Endothelial cell of umbilical vein (primary cell): ENCODE measurements at regions of chr12 and their contacts with region 1.

Region 1: DNA sequence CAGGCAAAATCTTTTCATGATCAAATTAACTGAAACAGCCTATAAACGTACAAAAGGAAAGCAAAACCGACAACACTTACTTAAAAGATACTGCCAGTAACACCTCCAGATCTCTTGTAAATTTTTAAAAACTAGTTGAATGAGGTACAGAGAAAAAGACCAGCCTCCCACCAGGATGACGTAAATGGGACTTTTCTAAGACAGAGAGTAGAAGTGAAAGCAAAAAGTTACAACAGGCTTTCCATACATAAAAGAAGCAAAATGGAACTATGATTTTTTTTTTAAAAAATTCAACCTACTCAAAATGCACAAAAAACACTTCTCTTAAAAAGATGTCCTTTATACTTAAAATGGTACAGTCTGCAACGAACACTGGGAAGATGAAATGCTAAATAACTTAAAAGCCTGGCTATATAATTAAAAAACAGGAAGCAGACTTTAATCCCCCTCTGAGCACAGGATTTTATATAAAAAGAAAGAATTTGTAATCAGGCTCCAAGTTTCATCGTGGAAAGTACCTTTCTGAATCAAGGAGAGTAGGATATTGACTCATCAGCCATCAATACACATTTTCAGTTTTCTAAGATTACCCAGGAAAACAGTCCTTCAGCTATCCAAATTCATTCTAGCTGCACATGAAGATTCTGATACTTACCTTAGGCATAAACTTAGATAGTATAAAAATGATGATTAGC is 14.2 kb upstream of the MYO1A start:
- DNase-seq: no peak
- H3K4me3 ChIP-seq: no peak overlapping the region
- H3K27ac ChIP-seq: no peak overlapping the region
- H3K4me1 ChIP-seq: no peaks in the 10 kb centered on the region
- H3K27me3 ChIP-seq: no peaks in the 10 kb centered on the region
- CTCF ChIP-seq: no peak
- POLR2A ChIP-seq: no peak

Region 2: DNA sequence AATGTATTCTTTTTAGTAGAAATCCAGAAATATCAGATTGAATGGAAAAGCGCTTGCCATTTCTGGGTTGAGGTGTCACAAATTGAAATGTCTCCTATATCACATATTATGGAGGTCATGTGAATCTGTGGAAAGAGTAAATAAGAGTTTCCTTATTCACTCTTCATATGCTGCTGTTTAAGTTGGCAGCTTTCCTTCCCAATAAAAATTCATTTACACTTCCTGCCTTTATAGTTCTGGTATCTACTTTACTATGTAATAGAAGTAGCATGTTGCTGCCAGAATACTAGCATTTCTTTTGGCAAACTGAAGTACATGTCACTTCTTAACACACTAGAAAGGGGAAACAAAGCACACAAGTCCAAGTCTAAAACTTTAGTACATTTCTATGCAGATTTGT is 190.8 kb before region 1 on chr12:
- CTCF ChIA-PET with region 1: no interaction called
- POLR2A ChIA-PET with region 1: interaction called, 12 read pairs
- dilution Hi-C with region 1: no loop called
- intact Hi-C with region 1: no loop called
- DNase-seq: peak; percentile 24
- H3K4me3 ChIP-seq: no peak overlapping the region
- H3K27ac ChIP-seq: no peak overlapping the region
- H3K4me1 ChIP-seq: no peaks in the 10 kb centered on the region
- H3K27me3 ChIP-seq: peaks cover 3 to 8% of the 10 kb centered on the region in 2 experiments
- CTCF ChIP-seq: no peak
- POLR2A ChIP-seq: no peak